Mammary epithelial cell (primary cell): ENCODE measurements at regions of chr18 and their contacts with region 1.

Region 1: GRCh38 chr18:63267975-63268721 is 51.4 kb downstream of the BCL2 start:
- DNase-seq: no peak
- H3K4me3 ChIP-seq: no peak overlapping the region
- H3K27ac ChIP-seq: no peak overlapping the region
- H3K4me1 ChIP-seq: no peaks in the 10 kb centered on the region
- H3K27me3 ChIP-seq: no peaks in the 10 kb centered on the region
- CTCF ChIP-seq: no peak

Region 2: GRCh38 chr18:63299837-63300745 is 31.9 kb after region 1 on chr18:
- CTCF ChIA-PET with region 1: no interaction called
- dilution Hi-C with region 1: no loop called
- in situ Hi-C with region 1: no loop called
- intact Hi-C with region 1: loop called (anchors 5 kb)
- DNase-seq: no peak
- H3K4me3 ChIP-seq: no peak overlapping the region
- H3K27ac ChIP-seq: no peak overlapping the region
- H3K4me1 ChIP-seq: no peaks in the 10 kb centered on the region
- H3K27me3 ChIP-seq: no peaks in the 10 kb centered on the region
- CTCF ChIP-seq: no peak